Activated B cell treated with CpG ODN at 0.5 μM for 24 hours (primary cell): ENCODE measurements at regions of chrX and their contacts with region 1.

Region 1: DNA sequence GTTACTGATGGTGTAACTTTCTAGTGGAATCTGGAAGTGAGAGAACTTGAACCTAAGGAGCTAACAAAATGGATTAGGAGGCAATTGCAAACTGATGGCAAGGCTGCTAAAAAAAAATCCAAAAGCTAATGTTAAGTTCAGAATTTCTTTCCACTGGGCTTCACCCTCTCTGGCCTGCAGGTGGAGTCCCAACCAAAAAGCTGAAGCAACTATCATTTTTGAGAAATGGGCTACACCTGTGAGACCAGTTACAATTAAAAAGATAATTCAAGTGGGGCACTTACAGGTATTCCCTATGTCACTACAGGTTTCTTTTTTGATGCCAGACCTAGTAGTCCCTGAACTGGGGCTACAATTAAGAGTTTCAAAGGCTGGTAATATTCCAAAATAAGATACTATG is 142.1 kb upstream of the FTHL17 start:
- DNase-seq: no peak
- ATAC-seq: peak; percentile 52
- H3K4me3 Mint-ChIP-seq: no peak overlapping the region
- H3K27ac Mint-ChIP-seq: no peak overlapping the region
- H3K4me1 Mint-ChIP-seq: peaks cover 8% of the 10 kb centered on the region
- H3K27me3 Mint-ChIP-seq: no peaks in the 10 kb centered on the region
- CTCF ChIP-seq: no peak

Region 2: GRCh38 chrX:31070057-31070468 is 143.9 kb before region 1 on chrX:
- CTCF ChIA-PET with region 1: no interaction called
- POLR2A ChIA-PET with region 1: interaction called, 11 read pairs
- intact Hi-C with region 1: no loop called
- DNase-seq: no peak
- ATAC-seq: no peak
- H3K4me3 Mint-ChIP-seq: no peak overlapping the region
- H3K27ac Mint-ChIP-seq: no peak overlapping the region
- H3K4me1 Mint-ChIP-seq: peaks cover 1% of the 10 kb centered on the region
- H3K27me3 Mint-ChIP-seq: no peaks in the 10 kb centered on the region
- CTCF ChIP-seq: no peak

Region 3: GRCh38 chrX:31266172-31267076 is 52.5 kb after region 1 on chrX:
- CTCF ChIA-PET with region 1: interaction called, 4 read pairs
- POLR2A ChIA-PET with region 1: interaction called, 3 read pairs
- intact Hi-C with region 1: loop called (anchors 2 kb)
- DNase-seq: peak; percentile 43
- ATAC-seq: peak; percentile 94
- H3K4me3 Mint-ChIP-seq: peak overlapping the region; percentile 88
- H3K27ac Mint-ChIP-seq: peak overlapping the region; percentile 30
- H3K4me1 Mint-ChIP-seq: peaks cover 4% of the 10 kb centered on the region
- H3K27me3 Mint-ChIP-seq: no peaks in the 10 kb centered on the region
- CTCF ChIP-seq: no peak

Region 4: GRCh38 chrX:31397119-31397518 is 183.2 kb after region 1 on chrX:
- CTCF ChIA-PET with region 1: no interaction called
- POLR2A ChIA-PET with region 1: no interaction called
- intact Hi-C with region 1: no loop called
- DNase-seq: no peak
- ATAC-seq: no peak
- H3K4me3 Mint-ChIP-seq: no peak overlapping the region
- H3K27ac Mint-ChIP-seq: no peak overlapping the region
- H3K4me1 Mint-ChIP-seq: no peaks in the 10 kb centered on the region
- H3K27me3 Mint-ChIP-seq: no peaks in the 10 kb centered on the region
- CTCF ChIP-seq: no peak

Region 5: DNA sequence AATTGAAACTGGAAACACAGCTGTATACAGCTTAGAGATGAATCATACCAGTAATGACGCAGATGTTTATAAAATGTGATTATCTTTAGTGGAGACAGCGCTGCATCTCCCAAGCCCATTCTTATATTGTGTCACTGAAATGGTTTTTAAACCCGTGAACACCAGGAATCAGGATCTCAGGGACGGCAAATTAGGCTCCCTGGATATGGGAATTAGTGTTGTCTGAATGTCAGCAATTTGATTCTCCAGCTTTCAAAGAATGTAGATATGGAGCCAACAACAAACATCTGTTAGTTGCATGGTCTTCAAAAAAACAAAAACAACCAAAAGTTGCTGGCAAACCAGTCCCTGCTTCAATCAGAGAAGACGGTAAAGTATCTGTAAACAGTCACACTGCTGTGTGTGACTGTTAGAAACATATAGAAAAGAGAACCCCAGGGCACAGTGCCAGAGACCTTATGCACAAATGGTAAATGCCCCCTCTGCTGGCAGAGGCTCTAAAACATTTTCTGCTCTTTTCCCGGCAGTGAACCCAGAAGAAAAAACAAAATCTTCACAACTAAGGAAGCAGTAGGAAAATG is 209.8 kb after region 1 on chrX:
- CTCF ChIA-PET with region 1: interaction called, 14 read pairs
- POLR2A ChIA-PET with region 1: no interaction called
- intact Hi-C with region 1: no loop called
- DNase-seq: no peak
- ATAC-seq: no peak
- H3K4me3 Mint-ChIP-seq: no peak overlapping the region
- H3K27ac Mint-ChIP-seq: no peak overlapping the region
- H3K4me1 Mint-ChIP-seq: peaks cover 7% of the 10 kb centered on the region
- H3K27me3 Mint-ChIP-seq: no peaks in the 10 kb centered on the region
- CTCF ChIP-seq: no peak

Region 6: DNA sequence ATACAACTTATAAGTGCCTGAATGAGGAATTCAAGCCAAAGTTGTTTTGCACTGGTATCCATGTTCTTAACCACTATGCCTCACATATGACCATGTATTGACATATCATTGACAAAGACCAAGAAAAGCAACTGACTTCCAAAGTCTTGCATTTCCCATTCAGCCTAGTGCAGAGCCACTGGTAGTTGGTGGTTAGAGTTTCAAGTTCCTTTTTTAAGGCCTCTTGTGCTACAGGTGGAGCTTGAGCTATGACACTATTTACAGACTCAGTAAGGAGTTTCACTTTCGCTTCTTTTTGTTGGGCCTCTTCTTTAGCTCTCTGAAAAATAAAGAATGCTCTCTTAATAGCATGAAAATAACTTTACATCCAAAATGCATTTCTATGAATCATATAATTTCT is 1234.4 kb after region 1 on chrX:
- CTCF ChIA-PET with region 1: no interaction called
- POLR2A ChIA-PET with region 1: no interaction called
- intact Hi-C with region 1: no loop called
- DNase-seq: no peak
- ATAC-seq: peak; percentile 92
- H3K4me3 Mint-ChIP-seq: peak overlapping the region; percentile 46
- H3K27ac Mint-ChIP-seq: peak overlapping the region; percentile 78
- H3K4me1 Mint-ChIP-seq: peaks cover 48% of the 10 kb centered on the region
- H3K27me3 Mint-ChIP-seq: no peaks in the 10 kb centered on the region
- CTCF ChIP-seq: no peak